ENCODE measurements at regions of chr11 and their contacts with region 1.

Region 1: DNA sequence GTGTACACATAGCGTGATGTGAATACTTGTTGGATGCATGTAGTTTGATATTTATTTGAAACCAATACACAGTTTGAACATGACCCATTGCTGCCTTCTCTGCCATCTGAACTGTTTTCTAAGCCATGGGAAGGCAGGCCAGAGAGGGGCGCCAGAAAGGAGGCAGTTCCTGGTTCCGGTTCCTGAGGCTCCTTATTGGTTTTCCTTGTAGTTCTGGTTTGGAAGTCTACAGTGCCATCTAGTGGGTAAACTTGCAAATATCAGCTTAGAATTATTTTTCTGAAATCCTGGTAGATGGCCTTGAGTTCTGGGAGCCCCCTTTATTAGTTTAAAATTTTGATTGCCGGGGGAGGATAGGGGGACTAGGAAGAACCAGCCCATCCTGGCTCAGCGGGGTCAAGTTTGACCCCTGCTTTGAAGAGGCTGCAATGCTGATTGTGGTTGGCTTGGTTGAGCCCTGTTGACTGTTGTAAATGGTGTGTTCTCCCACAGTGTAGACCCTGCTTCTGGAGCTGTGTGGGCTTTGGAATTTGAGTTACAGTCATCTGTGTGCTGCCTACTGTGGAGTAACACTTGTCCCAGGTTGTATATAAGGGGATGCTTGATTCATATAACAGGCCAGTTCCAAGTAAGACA is 48.4 kb downstream of the GRAMD1B start:
- DNase-seq: peak in 3 of 4 donors; percentile 43 to 78 (median 66)
- ATAC-seq: peak; percentile 88
- H3K4me3 ChIP-seq: no peak overlapping the region
- H3K27ac ChIP-seq: peak overlapping the region in 1 of 2 donors; percentile 55
- H3K4me1 ChIP-seq: peaks cover 0 to 41% of the 10 kb centered on the region in 2 donors
- H3K27me3 ChIP-seq: no peaks in the 10 kb centered on the region
- CTCF ChIP-seq: peak; percentile 47 to 53

Region 2: GRCh38 chr11:123301696-123302400 is 176.6 kb before region 1 on chr11:
- intact Hi-C with region 1: loop called in 1 of 2 experiments (anchors 5 kb)
- DNase-seq: peak; percentile 58 to 94 (median 64)
- ATAC-seq: peak; percentile 94
- H3K4me3 ChIP-seq: peak overlapping the region; percentile 35 to 36
- H3K27ac ChIP-seq: no peak overlapping the region
- H3K4me1 ChIP-seq: peaks cover 8 to 23% of the 10 kb centered on the region in 2 donors
- H3K27me3 ChIP-seq: peaks cover 7 to 54% of the 10 kb centered on the region in 2 donors
- CTCF ChIP-seq: peak; percentile 90 to 92

Region 3: DNA sequence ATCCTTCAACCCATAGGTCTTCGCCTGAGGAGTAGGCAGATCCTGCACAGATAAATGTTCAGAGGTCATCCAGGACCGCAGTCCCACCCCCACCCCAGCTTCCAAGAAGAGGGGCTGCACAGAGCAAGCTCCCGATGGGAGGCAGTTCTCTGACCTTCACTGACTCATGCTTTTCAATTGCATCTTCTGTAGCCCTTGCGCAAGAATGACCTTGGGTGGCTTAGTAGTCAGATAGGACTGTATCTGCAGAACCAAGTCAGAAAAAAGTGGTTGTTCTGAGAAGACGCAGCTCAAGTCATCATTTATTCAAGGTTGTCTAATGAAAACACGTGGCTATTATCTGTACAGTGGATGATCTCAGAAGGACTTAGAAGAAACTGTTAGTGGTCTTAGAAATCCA is 64.8 kb before region 1 on chr11:
- intact Hi-C with region 1: loop called in 1 of 2 experiments (anchors 5 kb)
- DNase-seq: no peak
- ATAC-seq: no peak
- H3K4me3 ChIP-seq: no peak overlapping the region
- H3K27ac ChIP-seq: no peak overlapping the region
- H3K4me1 ChIP-seq: no peaks in the 10 kb centered on the region
- H3K27me3 ChIP-seq: peaks cover 0 to 5% of the 10 kb centered on the region in 2 donors
- CTCF ChIP-seq: no peak